ENCODE measurements at regions of chr1 and their contacts with region 1.

Region 1: DNA sequence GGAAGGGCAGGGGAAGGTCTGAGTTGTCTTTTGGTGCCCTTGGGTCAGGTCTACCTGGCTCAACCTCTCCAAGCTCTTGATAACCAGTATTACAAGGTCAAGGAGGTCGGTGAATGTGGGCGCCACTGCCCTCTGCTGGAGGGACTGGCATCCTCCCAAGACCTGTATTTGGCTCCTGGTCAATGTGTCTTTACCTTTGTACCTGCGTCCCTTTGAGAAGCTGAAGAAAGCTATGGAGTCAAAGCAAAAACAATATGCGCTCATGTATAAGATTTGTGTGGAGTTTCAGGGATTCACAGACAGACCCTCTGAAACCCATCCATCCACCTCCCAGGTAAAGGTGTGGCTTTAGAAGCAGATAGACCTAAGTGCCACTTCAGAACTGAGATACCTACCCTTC is 61.8 kb upstream of the NBL1 start:
- DNase-seq: peak; percentile 30
- H3K4me3 ChIP-seq: no peak overlapping the region
- H3K27ac ChIP-seq: no peak overlapping the region
- H3K4me1 ChIP-seq: peaks cover 3% of the 10 kb centered on the region
- H3K27me3 ChIP-seq: no peaks in the 10 kb centered on the region

Region 2: DNA sequence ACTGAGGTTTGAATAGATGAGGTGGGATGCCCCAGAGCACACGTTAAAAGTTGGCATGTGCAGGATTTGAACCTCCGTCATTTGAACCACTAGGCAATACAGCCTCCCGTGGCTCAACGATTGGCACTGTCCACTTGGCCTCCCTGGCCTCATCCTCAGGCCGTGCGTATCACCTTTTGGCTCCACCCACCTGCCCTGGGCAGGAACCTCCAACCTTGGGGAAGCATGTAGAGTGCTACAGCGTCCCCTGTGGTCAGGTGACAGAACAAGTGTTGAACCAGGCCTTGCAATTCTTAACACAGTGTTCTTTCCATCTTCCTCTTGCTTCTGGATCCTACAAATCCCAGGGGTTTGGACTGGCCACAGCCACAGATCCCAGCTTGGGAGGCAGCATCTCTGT is 839.1 kb before region 1 on chr1:
- in situ Hi-C with region 1: no loop called
- DNase-seq: no peak
- H3K4me3 ChIP-seq: no peak overlapping the region
- H3K27ac ChIP-seq: no peak overlapping the region
- H3K4me1 ChIP-seq: no peaks in the 10 kb centered on the region
- H3K27me3 ChIP-seq: no peaks in the 10 kb centered on the region

Region 3: GRCh38 chr1:19630720-19631395 is 48.6 kb after region 1 on chr1:
- in situ Hi-C with region 1: loop called (anchors 5 kb)
- DNase-seq: no peak
- H3K4me3 ChIP-seq: no peak overlapping the region
- H3K27ac ChIP-seq: no peak overlapping the region
- H3K4me1 ChIP-seq: no peaks in the 10 kb centered on the region
- H3K27me3 ChIP-seq: no peaks in the 10 kb centered on the region

Measured in GM23248 (cell line).